ENCODE measurements at regions of chr9 and their contacts with region 1.

Region 1: GRCh38 chr9:4489919-4490704 is at the start of gene SLC1A1:
- DNase-seq: peak; percentile 78
- ATAC-seq: peak; percentile 84
- total RNA-seq, gene SLC1A1: 3.2 TPM

Region 2: DNA sequence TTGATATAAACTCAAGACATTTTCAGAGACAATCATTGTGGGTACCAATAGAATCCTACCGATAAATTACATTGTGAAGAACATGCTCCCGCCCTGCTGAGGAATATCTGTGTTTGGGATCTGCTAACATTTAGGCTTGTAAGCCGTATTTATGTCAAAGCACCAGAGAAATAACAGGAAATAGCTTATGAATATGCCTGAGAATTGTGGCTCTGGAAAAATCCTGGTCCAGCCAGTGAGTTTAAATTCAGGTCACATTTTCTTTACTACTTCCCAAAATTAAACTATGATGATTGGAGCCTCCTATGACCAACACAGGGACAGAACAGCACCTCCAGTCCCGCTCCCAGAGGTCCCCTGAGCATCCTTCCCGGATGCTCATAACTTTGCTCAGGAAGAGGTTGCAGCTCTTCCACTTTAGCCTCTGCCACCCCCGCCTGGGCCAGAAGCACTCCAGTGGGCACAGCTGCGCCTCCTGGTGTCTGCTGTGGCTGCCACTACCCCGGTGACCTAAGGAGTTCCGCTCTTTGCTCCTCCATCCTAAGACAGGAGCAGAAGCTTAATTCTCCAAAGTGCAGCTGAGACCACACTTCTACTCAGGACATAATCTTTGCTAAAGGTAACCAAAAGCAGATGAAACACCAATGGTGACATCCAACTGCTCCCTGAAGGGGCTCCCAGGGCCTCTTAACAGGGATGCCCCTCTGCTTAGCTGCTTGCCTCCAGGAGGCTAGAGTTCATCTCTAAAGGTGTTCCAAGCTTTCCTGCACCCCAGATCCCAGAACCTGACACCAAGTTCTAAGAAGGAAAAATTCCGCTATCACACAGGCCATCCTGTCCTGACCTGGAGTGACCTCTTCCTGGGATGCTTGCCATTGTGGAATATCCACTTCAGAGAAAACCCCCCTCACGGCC is 59.0 kb after region 1 on chr9:
- intact Hi-C with region 1: loop called (anchors 2 kb)
- DNase-seq: no peak
- ATAC-seq: peak; percentile 10

Region 3: GRCh38 chr9:4604678-4605095 is 114.6 kb after region 1 on chr9:
- intact Hi-C with region 1: loop called (anchors 2 kb)
- DNase-seq: no peak
- ATAC-seq: peak; percentile 64